Activated naive CD4-positive, alpha-beta T cell treated with anti-CD3 and anti-CD28 coated beads, Interleukin-2, amount 10 ng/mL, durations not matched to agents 7 days and 5 days (primary cell): ENCODE measurements at regions of chr5 and their contacts with region 1.

Region 1: DNA sequence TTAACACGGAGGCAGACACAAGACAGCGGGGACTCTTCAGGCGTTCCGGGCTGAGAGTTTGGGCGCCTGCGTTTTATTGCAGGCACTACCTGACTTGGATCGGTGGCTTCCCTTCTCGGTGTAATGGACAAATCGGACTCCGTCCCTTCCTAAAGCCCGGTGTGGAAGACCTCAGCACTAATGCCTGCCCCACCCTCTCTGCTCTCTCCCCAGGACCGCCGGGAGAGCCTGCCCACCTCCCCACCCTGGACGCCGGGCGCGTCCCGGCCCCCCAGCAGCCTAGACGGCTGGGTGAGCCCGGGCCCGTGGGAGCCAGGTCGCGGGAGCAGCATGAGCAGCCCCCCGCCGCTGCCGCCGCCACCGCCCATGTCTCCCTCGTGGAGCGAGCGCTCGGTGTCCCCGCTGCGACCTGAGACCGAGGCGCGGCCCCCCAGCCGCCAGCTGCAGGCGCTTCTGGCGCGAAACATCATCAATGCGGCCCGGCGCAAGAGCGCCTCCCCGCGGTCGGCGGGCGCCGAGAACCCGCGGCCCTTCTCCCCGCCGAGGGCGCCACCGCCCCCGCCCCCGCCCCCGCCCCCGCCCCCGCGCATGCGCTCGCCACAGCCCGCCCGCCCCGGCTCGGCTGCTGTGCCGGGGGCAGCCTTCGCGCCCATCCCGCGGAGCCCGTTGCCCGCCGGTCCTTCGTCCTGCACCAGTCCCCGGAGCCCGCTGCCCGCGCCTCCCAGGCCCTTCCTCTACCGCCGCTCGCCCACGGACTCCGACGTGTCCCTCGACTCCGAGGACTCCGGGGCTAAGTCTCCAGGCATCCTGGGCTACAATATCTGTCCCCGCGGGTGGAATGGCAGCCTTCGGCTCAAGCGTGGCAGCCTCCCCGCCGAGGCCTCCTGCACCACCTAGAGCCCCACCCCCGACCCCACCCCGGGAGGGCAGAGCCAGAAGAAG is 4.6 kb upstream of the MYOZ3 start:
- DNase-seq: peak; percentile 85
- H3K4me3 Mint-ChIP-seq: peak overlapping the region; percentile 78
- H3K27ac Mint-ChIP-seq: no peak overlapping the region
- H3K4me1 Mint-ChIP-seq: peaks cover 13% of the 10 kb centered on the region
- H3K27me3 Mint-ChIP-seq: peaks cover 22% of the 10 kb centered on the region

Region 2: DNA sequence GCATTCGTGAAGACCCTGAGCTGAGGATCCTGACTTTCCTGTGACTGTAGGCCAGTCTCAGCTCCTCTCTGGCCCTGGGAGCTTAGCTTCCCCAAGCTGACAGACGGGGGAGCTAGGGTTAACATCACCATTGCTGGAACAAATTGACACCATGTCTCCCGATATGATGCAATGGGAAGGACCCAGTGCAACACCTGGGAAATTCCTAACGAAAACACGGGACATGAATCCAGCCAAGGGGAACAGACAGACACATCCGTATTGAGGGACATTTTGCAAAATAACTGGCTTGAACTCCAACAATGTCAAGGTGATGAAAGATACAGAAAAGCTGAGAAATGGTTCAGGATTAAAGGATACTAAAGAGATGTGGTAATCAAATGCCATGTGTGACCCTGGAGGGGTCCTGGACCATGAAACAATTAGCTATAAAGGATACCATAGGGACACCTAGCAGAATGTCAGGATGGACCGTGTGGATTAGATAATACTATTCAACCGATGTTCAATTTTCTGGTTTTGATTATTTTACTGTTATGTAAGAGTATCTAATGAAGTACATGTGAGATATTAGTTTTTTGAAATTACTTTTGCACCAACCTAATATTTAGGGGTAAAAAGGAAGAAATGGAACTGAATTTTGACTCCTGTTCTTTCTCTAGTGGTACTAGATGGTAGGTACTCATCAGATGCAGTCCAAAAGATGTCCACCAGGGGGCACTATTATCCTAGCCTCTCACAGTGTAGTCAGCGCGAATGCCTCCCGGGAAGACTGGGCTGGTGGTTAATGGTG is 95.9 kb before region 1 on chr5:
- CTCF ChIA-PET with region 1: interaction called, 13 read pairs
- DNase-seq: peak; percentile 91
- H3K4me3 Mint-ChIP-seq: no peak overlapping the region
- H3K27ac Mint-ChIP-seq: no peak overlapping the region
- H3K4me1 Mint-ChIP-seq: no peaks in the 10 kb centered on the region
- H3K27me3 Mint-ChIP-seq: peaks cover 7% of the 10 kb centered on the region